Ascending aorta (tissue), 2 donors: ENCODE measurements at regions of chr3 and their contacts with region 1.

Region 1: DNA sequence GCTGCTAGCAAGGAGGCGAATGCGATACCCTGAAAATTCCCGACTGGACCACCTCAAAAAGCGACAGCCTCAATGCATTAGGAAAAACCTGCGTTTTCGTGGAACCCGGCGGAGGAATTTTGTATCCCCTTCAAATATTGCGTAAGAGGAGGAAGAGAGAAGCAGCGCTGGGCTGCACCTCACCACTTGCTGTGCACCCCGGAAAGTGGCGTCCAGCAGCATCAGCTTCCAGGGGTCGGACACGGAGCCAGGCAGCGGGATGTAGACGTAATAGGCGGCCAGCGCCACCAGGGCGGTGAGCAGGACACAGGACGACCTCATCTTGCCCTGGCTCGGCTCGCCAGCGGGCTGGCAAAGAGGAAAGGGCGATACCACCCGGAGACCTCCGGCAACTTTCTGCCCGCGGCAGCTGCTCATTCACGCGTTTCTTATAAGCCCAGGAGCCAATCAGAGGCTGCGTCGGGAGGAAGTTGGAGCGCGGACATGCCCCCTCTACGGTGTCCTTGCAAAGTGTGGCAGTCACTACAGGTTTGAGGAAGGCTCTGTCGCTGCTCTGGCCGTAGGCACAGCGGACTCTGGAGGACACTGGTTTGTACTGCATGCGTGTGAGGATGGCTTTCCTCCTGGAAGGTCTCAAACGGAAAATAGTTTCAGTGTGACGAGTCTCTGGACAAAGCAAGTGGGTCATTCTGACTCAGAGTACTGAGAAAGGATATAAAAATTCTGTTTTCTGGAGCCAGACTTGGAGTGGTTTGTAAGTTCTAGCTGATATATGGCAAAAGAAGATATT is at the start of gene NCEH1:
- DNase-seq: peak; percentile 81 to 97
- H3K4me3 ChIP-seq: peak within 1 kb of the TSS; percentile 69 to 94
- H3K27ac ChIP-seq: peak within 1 kb of the TSS; percentile 91 to 97
- H3K4me1 ChIP-seq: peaks cover 0 to 24% of the 10 kb centered on the region in 2 donors
- H3K27me3 ChIP-seq: no peaks in the 10 kb centered on the region
- CTCF ChIP-seq: peak; percentile 79 to 93 (median 82)
- total RNA-seq, gene NCEH1: 19.1 TPM

Region 2: DNA sequence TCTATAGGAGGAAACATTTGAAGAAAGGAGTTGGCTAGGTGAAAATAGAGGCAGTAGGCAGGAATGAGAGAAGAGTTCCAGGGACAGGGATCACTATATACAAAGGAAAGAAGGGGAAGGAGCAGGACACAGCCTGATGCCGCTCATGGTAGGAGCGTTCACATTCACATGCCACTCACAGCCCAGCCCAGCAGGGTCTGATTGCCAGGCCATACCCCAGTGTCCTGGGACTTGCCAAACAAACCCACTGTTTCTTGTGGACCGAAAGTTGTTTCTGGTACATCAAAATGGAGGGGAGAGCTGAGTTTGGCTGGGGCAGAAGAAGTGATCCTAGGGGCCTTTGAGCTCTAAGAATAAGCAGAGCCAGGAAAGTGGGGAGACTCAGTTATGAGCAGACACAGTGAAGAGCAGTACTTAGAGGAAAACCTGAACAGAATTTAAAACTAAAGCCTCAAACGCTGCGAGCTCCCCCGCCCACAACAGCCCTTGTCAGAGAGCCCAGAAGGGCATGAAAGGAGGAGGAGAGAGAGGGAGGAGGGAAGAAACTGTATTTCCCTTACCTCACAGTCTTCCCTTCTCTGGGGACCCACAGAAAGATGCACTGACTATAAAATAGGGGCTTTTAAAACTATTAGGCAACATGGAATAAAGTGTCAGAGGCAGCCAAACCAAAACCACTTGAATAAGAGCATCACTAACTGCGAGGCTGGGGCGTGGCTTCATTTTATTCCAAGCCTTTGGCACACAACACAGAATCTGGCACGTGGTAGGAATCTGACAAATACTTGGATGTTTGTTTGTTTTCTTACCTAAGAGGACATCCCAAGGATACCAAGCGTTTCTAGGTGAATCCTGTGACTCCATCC is 1969.9 kb before region 1 on chr3:
- intact Hi-C with region 1: loop called (anchors 5 kb)
- DNase-seq: peak in 1 of 2 donors; percentile 75
- H3K4me3 ChIP-seq: peak overlapping the region in 1 of 2 donors; percentile 34
- H3K27ac ChIP-seq: peak overlapping the region; percentile 78 to 83
- H3K4me1 ChIP-seq: peaks cover 0 to 22% of the 10 kb centered on the region in 2 donors
- H3K27me3 ChIP-seq: no peaks in the 10 kb centered on the region
- CTCF ChIP-seq: no peak

Region 3: DNA sequence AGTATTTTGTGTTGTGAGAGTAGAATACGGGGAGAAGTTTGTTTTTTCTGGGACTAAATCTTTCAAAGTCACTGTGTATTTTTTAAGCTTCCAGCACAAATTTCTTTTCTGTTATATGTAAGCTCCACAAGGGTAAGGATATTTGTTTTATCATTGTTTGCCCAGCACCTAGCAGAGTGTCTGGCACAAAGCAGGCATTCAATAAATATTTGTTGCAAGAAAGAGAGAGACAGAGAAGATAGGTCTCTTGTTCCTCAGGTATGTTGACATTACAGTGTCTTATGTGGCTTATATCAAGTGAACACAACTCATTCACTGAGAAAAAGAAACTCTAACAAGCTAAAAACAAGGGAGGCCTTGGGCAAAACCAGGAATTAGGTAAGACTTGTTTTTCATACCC is 698.1 kb before region 1 on chr3:
- intact Hi-C with region 1: no loop called
- DNase-seq: no peak
- H3K4me3 ChIP-seq: no peak overlapping the region
- H3K27ac ChIP-seq: no peak overlapping the region
- H3K4me1 ChIP-seq: no peaks in the 10 kb centered on the region
- H3K27me3 ChIP-seq: no peaks in the 10 kb centered on the region
- CTCF ChIP-seq: no peak

Region 4: DNA sequence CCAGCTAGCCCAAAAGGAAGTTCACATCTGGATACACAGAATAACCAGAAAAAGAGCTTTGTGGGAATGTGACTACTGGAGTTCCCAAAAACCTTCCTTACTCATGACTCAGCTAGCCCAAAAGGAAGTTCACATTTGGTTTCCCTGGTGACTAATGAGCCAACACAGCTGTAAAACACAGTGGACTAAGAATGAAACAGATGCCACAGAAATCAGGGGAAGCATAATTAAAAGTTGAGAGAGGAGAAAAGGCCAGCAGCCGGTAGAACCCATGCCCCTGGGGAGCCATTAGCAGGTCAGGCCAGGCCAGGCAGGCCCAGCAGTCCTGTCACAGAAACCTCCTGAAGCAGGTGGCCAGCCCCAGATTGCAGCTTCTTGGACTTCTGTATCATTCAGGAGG is 392.9 kb before region 1 on chr3:
- intact Hi-C with region 1: no loop called
- DNase-seq: peak in 1 of 2 donors; percentile 82
- H3K4me3 ChIP-seq: no peak overlapping the region
- H3K27ac ChIP-seq: peak overlapping the region; percentile 80 to 84
- H3K4me1 ChIP-seq: peaks cover 4 to 72% of the 10 kb centered on the region in 2 donors
- H3K27me3 ChIP-seq: no peaks in the 10 kb centered on the region
- CTCF ChIP-seq: no peak

Region 5: GRCh38 chr3:172546628-172547214 is 164.1 kb before region 1 on chr3:
- intact Hi-C with region 1: loop called (anchors 10 kb)
- DNase-seq: no peak
- H3K4me3 ChIP-seq: no peak overlapping the region
- H3K27ac ChIP-seq: peak overlapping the region in 1 of 2 donors; percentile 25
- H3K4me1 ChIP-seq: peaks cover 0 to 10% of the 10 kb centered on the region in 2 donors
- H3K27me3 ChIP-seq: no peaks in the 10 kb centered on the region
- CTCF ChIP-seq: no peak

Region 6: DNA sequence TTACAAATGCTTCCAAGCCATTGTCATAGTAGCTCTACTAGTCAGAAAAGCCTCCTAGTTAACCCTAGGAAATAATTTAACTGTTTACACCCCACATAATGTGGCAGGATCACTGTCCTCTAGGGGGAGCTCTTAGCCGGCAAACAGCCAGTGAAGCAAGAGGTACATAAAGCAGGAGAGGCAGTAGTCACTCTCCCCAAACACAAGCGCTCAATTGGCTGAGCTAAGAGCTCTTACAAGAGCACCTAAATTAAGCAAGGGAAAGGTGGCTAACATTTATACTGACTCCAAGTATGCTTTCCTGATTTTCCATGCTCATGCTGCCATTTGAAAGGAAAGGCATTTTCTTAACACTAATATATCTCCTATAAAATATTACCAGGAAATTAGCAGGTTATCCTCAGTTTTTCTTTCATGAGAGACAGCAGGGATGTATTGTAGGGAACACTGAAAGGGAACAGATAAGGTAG is 37.6 kb before region 1 on chr3:
- intact Hi-C with region 1: loop called (anchors 2 kb)
- DNase-seq: no peak
- H3K4me3 ChIP-seq: no peak overlapping the region
- H3K27ac ChIP-seq: no peak overlapping the region
- H3K4me1 ChIP-seq: peaks cover 0 to 11% of the 10 kb centered on the region in 2 donors
- H3K27me3 ChIP-seq: no peaks in the 10 kb centered on the region
- CTCF ChIP-seq: peak in 2 of 3 experiments; percentile 48 to 52

Region 7: DNA sequence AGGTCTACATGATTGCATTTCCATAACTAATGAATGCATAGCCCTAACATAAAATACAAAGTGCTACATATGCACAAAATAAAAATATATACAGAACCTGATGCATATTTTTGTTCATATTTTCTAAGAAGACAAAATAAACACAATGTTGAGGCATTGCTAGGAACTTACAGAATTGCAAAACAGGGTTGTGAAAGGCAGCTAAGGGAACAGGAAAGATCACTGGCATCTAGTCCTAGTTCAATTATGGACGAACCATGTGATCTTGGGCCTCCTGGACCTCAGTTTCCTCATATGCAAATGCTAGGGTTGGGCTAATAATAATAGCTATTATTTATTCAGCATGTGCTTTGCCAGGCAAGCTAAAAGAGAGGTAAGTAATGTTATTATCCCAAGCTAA is 15.5 kb after region 1 on chr3:
- intact Hi-C with region 1: no loop called
- DNase-seq: no peak
- H3K4me3 ChIP-seq: no peak overlapping the region
- H3K27ac ChIP-seq: no peak overlapping the region
- H3K4me1 ChIP-seq: no peaks in the 10 kb centered on the region
- H3K27me3 ChIP-seq: no peaks in the 10 kb centered on the region
- CTCF ChIP-seq: no peak

Region 8: GRCh38 chr3:172750368-172751174 is 39.7 kb after region 1 on chr3 and contains the start of gene ECT2:
- intact Hi-C with region 1: loop called (anchors 1 kb)
- DNase-seq: peak; percentile 98 to 100
- H3K4me3 ChIP-seq: peak within 1 kb of the TSS; percentile 69 to 80
- H3K27ac ChIP-seq: peak within 1 kb of the TSS; percentile 57 to 83
- H3K4me1 ChIP-seq: peaks cover 0 to 13% of the 10 kb centered on the region in 2 donors
- H3K27me3 ChIP-seq: no peaks in the 10 kb centered on the region
- CTCF ChIP-seq: peak; percentile 68 to 72 (median 72)
- total RNA-seq, gene ECT2: 27.1 TPM